ENCODE measurements at regions of chr19 and their contacts with region 1.

Region 1: DNA sequence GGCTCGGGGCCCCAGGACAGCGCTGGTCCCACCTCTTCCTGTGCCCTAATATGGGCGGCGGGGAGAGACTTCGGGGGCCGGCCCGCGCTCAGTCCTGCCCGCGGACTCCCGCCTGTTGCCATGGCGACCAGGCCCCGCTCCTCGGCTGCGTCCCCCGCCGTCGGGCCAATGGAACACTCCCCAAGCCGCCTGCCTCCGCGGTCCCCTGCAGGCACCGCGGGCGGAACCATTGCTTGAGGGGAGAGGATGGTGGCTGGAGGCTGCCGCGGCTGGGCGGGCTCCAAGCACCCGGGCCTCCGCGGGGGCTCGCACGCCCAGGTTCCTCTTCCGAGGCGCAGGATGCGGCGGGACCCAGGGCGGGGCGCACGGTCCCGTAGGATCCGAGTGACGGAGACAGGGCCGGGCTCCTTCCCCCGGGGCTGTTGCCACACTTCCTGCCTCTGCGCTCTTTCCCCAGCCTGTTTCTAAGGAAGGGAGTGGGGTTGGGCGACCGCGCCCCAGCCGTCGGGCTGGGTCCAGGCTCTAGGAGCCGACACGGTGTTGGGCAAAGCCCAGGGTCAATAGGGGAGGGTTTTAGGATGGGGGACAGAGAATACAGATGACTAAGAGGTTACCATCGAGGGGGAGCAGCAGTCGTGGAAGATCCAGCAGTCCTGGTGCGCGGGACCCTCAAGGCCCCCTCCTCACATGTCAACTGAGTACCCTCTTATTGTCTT is 1.2 kb upstream of the JUNB start:
- DNase-seq: peak; percentile 99
- ATAC-seq: peak; percentile 48
- H3K4me3 Mint-ChIP-seq: peak overlapping the region; percentile 92
- H3K27ac Mint-ChIP-seq: peak overlapping the region; percentile 98
- H3K4me1 Mint-ChIP-seq: peaks cover 28% of the 10 kb centered on the region
- H3K27me3 Mint-ChIP-seq: no peaks in the 10 kb centered on the region

Region 2: GRCh38 chr19:12681074-12681951 is 108.7 kb before region 1 on chr19 and contains the start of gene DHPS:
- CTCF ChIA-PET with region 1: interaction called, 13 read pairs
- POLR2A ChIA-PET with region 1: interaction called, 13 read pairs
- intact Hi-C with region 1: loop called in 1 of 2 experiments (anchors 1 kb)
- DNase-seq: peak; percentile 94
- ATAC-seq: peak; percentile 90
- H3K4me3 Mint-ChIP-seq: peak within 1 kb of the TSS; percentile 99
- H3K27ac Mint-ChIP-seq: peak within 1 kb of the TSS; percentile 97
- H3K4me1 Mint-ChIP-seq: peaks cover 23% of the 10 kb centered on the region
- H3K27me3 Mint-ChIP-seq: no peaks in the 10 kb centered on the region
- total RNA-seq, gene DHPS: 101 to 112 TPM

Region 3: DNA sequence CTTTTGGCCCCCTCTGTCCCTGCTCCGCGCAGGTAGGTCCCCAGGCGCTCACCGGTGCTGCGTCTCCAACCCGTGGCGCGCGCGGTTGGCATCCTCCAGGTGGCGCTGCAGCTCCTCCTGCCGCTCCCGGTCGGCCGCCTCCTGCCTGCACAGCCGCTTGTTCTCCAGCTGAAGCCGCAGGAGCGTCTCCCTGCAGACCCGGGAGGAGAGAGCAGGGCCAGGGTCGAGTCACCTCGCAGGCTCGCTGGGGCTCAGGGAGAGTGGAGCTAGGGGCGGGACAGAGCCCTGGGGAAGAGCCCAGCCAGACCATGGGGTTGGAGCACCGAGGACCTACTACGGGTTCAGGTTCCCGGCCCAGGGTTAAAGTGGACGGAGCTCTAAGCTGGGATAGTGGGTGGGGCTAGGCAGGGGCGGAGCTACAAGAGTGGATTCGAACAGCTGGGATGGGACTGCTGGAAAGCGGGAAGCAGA is 24.0 kb before region 1 on chr19:
- CTCF ChIA-PET with region 1: interaction called, 451 read pairs
- POLR2A ChIA-PET with region 1: interaction called, 12 read pairs
- intact Hi-C with region 1: no loop called
- DNase-seq: peak; percentile 94
- ATAC-seq: peak; percentile 83
- H3K4me3 Mint-ChIP-seq: peak overlapping the region; percentile 17
- H3K27ac Mint-ChIP-seq: no peak overlapping the region
- H3K4me1 Mint-ChIP-seq: peaks cover 10% of the 10 kb centered on the region
- H3K27me3 Mint-ChIP-seq: no peaks in the 10 kb centered on the region

Region 4: GRCh38 chr19:12938234-12939025 is 148.4 kb after region 1 on chr19 and contains the start of gene CALR:
- CTCF ChIA-PET with region 1: interaction called, 3 read pairs
- POLR2A ChIA-PET with region 1: no interaction called
- intact Hi-C with region 1: loop called (anchors 1 to 5 kb)
- DNase-seq: peak; percentile 99
- ATAC-seq: peak; percentile 89
- H3K4me3 Mint-ChIP-seq: peak within 1 kb of the TSS; percentile 99
- H3K27ac Mint-ChIP-seq: peak within 1 kb of the TSS; percentile 96
- H3K4me1 Mint-ChIP-seq: peaks cover 59% of the 10 kb centered on the region
- H3K27me3 Mint-ChIP-seq: no peaks in the 10 kb centered on the region
- total RNA-seq, gene CALR: 557 to 569 TPM

Region 5: DNA sequence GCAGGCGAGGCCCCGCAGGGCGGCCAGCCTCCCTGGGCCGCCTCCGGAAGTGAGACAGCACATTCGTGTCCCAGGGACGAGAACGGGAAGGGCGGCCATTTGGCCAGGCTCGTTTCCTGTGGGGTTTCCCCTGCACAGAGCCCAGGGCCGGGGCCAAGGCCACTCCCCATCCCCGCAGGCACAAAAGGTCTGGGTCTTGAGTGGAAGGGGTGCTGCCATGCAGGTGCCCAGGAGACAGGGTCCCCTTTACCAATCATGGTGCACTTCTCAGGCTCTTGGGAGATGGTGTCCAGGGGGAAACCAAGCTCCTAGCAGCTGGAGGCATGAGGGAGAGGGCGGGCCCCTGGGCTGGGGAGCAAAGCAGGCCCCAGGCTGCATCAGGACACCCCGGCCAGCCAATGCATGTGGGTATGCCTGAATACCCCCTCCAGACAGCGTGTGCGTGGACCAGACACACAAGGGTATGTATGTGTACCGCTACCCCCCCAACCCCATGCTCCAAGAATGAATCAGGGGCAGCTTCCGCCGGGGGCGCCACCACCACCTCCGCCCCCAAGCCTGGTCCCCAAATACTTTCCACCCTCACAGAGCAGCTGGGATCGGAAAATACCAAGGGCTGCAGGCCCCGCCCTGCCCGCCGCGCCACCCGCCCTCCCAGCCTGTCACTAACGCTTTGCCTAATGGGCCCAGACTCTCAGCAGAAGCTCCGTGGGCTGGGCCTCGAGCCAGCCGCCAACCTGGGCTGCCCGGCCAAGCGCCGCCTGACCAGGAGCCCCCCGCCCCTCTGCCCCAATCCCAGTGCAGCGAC is 1049.3 kb after region 1 on chr19:
- CTCF ChIA-PET with region 1: no interaction called
- POLR2A ChIA-PET with region 1: no interaction called
- intact Hi-C with region 1: loop called in 1 of 2 experiments (anchors 2 kb)
- DNase-seq: peak; percentile 96
- ATAC-seq: peak; percentile 68
- H3K4me3 Mint-ChIP-seq: peak overlapping the region; percentile 94
- H3K27ac Mint-ChIP-seq: peak overlapping the region; percentile 95
- H3K4me1 Mint-ChIP-seq: peaks cover 54% of the 10 kb centered on the region
- H3K27me3 Mint-ChIP-seq: no peaks in the 10 kb centered on the region

Region 6: DNA sequence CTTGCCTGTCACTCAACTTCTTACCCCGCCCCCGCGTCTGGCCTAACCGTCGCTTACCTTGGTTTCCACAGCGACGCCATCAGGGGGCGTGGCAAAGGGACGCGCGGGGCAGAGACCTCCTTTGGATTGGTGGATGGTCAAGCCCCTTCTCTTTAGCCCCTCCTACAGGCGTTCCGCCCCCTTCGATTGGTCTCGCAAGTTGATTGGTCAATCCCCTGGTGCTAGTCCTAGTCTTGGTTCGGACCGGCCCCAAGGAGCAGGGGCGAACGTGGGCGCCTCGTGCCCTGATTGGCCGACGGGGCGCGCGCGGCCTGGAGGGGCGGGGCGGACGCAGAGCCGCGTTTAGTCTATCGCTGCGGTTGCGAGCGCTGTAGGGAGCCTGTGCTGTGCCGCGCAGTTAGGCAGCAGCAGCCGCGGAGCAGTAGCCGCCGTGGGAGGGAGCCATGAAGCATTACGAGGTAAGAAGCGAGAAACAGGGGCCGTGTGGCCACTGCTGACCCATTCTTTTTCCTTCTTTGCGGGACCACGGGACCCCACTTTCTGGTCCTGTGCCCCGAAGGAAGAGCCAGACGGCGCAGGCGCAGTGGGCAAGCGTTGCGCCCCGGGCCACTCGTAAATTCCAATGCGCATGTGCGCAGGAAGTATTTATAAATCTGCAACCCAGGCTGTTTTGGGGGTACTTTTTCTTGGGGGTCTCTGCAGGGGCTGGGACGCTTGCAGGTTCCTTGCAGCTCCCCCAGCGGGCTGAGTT is 1739.4 kb after region 1 on chr19 and contains the start of gene TECR:
- CTCF ChIA-PET with region 1: no interaction called
- POLR2A ChIA-PET with region 1: no interaction called
- intact Hi-C with region 1: loop called (anchors 10 kb)
- DNase-seq: peak; percentile 100
- ATAC-seq: peak; percentile 98
- H3K4me3 Mint-ChIP-seq: peak within 1 kb of the TSS; percentile 83
- H3K27ac Mint-ChIP-seq: peak within 1 kb of the TSS; percentile 90
- H3K4me1 Mint-ChIP-seq: peaks cover 37% of the 10 kb centered on the region
- H3K27me3 Mint-ChIP-seq: no peaks in the 10 kb centered on the region
- total RNA-seq, gene TECR: 106 to 145 TPM